Activated CD8-positive, alpha-beta T cell treated with anti-CD3 and anti-CD28 coated beads, Interleukin-2, amount 10 ng/mL, durations not matched to agents 7 days and 5 days (primary cell): ENCODE measurements at regions of chr12 and their contacts with region 1.

Region 1: DNA sequence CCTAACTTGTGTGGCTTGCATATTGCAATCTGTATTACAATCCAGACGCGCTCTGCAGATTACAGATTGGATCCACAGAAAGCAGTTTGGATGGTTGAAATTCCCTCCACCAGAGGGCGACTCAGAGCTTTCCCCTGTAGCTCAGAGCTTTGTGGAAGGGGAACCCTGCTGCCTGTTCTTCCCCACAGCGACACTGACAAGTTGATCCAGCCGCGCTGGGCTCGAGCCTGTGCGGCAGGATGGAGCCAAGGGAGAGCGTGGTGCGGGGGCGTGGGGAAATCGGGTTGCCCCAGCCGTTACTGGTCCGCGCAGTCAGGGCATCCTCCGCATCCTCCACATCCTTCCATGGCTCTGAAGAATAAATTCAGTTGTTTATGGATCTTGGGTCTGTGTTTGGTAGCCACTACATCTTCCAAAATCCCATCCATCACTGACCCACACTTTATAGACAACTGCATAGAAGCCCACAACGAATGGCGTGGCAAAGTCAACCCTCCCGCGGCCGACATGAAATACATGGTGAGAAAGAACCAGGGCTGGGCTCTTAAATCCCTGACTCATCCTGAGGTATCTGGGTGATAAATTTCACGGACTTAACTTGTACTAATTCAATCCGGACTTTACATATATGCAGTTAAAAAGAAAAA is at the start of gene GLIPR1L1:
- DNase-seq: peak; percentile 88
- ATAC-seq: peak; percentile 83
- H3K4me3 Mint-ChIP-seq: peak within 1 kb of the TSS; percentile 56
- H3K27ac Mint-ChIP-seq: no peak within 1 kb of the TSS
- H3K4me1 Mint-ChIP-seq: peaks cover 33% of the 10 kb centered on the region
- H3K27me3 Mint-ChIP-seq: peaks cover 26% of the 10 kb centered on the region
- total RNA-seq, gene GLIPR1L1: not detected

Region 2: GRCh38 chr12:75305412-75306332 is 28.8 kb before region 1 on chr12:
- CTCF ChIA-PET with region 1: no interaction called
- POLR2A ChIA-PET with region 1: no interaction called
- DNase-seq: no peak
- ATAC-seq: no peak
- H3K4me3 Mint-ChIP-seq: no peak overlapping the region
- H3K27ac Mint-ChIP-seq: no peak overlapping the region
- H3K4me1 Mint-ChIP-seq: no peaks in the 10 kb centered on the region
- H3K27me3 Mint-ChIP-seq: no peaks in the 10 kb centered on the region

Region 3: DNA sequence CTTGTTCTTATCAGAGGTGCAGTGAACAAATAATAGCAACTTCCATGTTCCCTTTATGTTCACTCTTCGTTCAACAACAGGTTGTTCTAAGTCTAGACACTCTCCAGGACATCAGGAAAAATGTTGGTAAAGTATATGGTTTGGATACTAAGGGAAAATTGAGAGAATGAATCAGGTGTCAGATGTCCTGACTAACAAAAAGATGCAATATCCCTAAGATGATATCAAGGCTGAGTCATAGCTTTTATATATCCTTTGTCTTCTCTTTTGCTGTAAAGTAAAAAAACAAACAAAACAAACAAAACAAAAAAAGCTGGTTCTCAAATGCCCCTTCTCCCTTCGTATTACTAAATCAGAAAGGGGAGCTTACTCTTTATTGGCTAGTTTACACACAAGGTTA is 11.0 kb after region 1 on chr12:
- CTCF ChIA-PET with region 1: interaction called, 10 read pairs
- POLR2A ChIA-PET with region 1: no interaction called
- DNase-seq: no peak
- ATAC-seq: no peak
- H3K4me3 Mint-ChIP-seq: no peak overlapping the region
- H3K27ac Mint-ChIP-seq: no peak overlapping the region
- H3K4me1 Mint-ChIP-seq: peaks cover 11% of the 10 kb centered on the region
- H3K27me3 Mint-ChIP-seq: peaks cover 5% of the 10 kb centered on the region

Region 4: GRCh38 chr12:75414671-75415070 is 80.2 kb after region 1 on chr12:
- CTCF ChIA-PET with region 1: no interaction called
- POLR2A ChIA-PET with region 1: no interaction called
- DNase-seq: no peak
- ATAC-seq: no peak
- H3K4me3 Mint-ChIP-seq: no peak overlapping the region
- H3K27ac Mint-ChIP-seq: no peak overlapping the region
- H3K4me1 Mint-ChIP-seq: no peaks in the 10 kb centered on the region
- H3K27me3 Mint-ChIP-seq: no peaks in the 10 kb centered on the region

Region 5: GRCh38 chr12:75505706-75506312 is 171.3 kb after region 1 on chr12:
- CTCF ChIA-PET with region 1: interaction called, 15 read pairs
- POLR2A ChIA-PET with region 1: no interaction called
- DNase-seq: no peak
- ATAC-seq: no peak
- H3K4me3 Mint-ChIP-seq: no peak overlapping the region
- H3K27ac Mint-ChIP-seq: no peak overlapping the region
- H3K4me1 Mint-ChIP-seq: peaks cover 26% of the 10 kb centered on the region
- H3K27me3 Mint-ChIP-seq: no peaks in the 10 kb centered on the region